CD4-positive, alpha-beta memory T cell (primary cell): ENCODE measurements at regions of chr4 and their contacts with region 1.

Region 1: DNA sequence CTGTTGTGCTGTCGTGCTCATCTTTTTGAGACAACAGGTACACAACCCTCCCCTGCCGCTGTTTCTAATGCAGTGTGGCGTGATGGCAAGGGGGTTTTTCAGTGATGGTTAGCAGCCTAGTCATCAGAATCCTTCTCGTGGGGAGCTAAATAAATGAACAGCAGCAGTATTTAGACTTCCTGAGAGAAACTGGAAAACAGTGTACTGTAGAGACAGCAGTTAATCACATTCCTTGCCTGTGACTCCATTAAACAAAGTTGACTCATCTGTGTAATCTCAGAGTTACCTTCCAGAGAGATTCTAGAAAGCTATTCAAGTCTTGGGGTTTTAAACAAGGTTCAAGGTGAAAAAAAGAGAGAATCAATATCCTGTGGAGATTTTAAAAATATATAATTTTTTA is 1753.2 kb upstream of the PCDH7 start:
- DNase-seq: no peak
- H3K4me3 ChIP-seq: no peak overlapping the region
- H3K4me3 Mint-ChIP-seq: no peak overlapping the region
- H3K27ac ChIP-seq: no peak overlapping the region
- H3K27ac Mint-ChIP-seq: no peak overlapping the region
- H3K4me1 ChIP-seq: no peaks in the 10 kb centered on the region
- H3K4me1 Mint-ChIP-seq: no peaks in the 10 kb centered on the region
- H3K27me3 ChIP-seq: no peaks in the 10 kb centered on the region
- H3K27me3 Mint-ChIP-seq: no peaks in the 10 kb centered on the region

Region 2: DNA sequence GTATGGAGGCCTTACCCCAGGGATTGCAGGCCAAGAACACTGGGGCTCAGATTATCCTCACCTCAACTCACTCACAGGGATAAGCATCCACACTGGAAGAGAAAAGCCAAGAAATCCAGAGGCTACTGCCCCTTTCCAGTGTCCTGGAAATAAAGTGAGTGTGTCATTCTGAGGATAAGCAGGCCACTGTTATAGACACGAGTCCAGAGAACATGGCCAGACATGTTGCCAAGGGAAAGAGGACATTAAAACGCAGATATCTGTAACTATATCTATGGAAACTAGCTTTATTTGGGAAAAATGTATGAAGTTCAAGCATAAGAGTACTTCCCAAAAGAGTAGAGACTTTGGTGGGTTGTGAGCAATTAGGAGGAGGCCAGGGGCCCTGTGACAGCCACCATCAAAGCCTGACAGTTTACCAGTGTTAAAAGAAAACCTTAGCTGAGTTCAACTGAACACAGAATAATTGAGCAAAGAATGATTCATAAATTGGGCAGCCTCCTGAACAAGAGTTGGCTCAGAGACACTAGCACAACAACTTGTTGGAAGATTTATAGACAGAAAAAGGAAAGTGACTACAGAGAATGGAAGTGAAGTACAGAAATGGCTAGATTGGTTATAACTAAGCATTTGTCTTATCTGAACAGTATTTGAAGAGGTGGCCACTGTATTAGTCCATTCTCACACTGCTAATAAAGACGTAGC is 884.1 kb before region 1 on chr4:
- CTCF ChIA-PET with region 1: no interaction called
- POLR2A ChIA-PET with region 1: no interaction called
- intact Hi-C with region 1: no loop called
- DNase-seq: no peak
- H3K4me3 ChIP-seq: no peak overlapping the region
- H3K4me3 Mint-ChIP-seq: no peak overlapping the region
- H3K27ac ChIP-seq: no peak overlapping the region
- H3K27ac Mint-ChIP-seq: no peak overlapping the region
- H3K4me1 ChIP-seq: no peaks in the 10 kb centered on the region
- H3K4me1 Mint-ChIP-seq: no peaks in the 10 kb centered on the region
- H3K27me3 ChIP-seq: no peaks in the 10 kb centered on the region
- H3K27me3 Mint-ChIP-seq: no peaks in the 10 kb centered on the region

Region 3: GRCh38 chr4:28918871-28919270 is 48.1 kb before region 1 on chr4:
- CTCF ChIA-PET with region 1: no interaction called
- POLR2A ChIA-PET with region 1: no interaction called
- intact Hi-C with region 1: loop called (anchors 5 kb)
- DNase-seq: no peak
- H3K4me3 ChIP-seq: no peak overlapping the region
- H3K4me3 Mint-ChIP-seq: no peak overlapping the region
- H3K27ac ChIP-seq: no peak overlapping the region
- H3K27ac Mint-ChIP-seq: no peak overlapping the region
- H3K4me1 ChIP-seq: no peaks in the 10 kb centered on the region
- H3K4me1 Mint-ChIP-seq: no peaks in the 10 kb centered on the region
- H3K27me3 ChIP-seq: no peaks in the 10 kb centered on the region
- H3K27me3 Mint-ChIP-seq: no peaks in the 10 kb centered on the region

Region 4: DNA sequence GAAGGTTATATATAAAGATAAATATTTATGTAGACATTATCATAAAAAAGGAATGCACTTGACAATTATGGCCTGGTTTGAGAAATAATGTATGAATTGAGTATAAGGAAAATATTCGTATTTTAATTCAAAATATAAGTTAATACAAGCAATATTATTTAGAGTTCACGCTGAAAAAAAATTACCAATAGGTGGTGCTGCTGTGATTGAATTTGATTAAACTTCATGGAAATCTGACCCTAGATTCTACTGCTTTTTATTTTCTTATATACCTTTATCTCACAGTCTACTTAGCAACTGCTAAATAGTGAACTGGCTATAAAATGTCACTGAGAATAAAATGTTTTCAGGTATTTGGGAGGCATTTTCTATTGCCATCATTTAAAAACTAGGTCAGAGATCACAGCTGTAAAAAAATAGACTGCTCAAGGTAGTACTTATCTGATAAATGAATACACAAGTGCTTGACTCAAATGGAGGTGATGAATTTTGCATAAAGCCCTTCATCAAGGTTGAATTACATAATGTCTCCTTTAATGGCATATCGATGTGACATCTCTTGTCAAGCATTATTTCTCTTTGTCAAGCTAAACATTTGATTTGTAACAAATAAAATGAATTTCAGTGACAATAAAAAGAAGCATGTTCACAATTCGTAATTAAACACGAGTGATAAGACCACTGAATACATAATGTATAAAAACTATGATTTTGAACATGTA is 114.4 kb after region 1 on chr4:
- CTCF ChIA-PET with region 1: no interaction called
- POLR2A ChIA-PET with region 1: no interaction called
- intact Hi-C with region 1: no loop called
- DNase-seq: no peak
- H3K4me3 ChIP-seq: no peak overlapping the region
- H3K4me3 Mint-ChIP-seq: no peak overlapping the region
- H3K27ac ChIP-seq: no peak overlapping the region
- H3K27ac Mint-ChIP-seq: no peak overlapping the region
- H3K4me1 ChIP-seq: no peaks in the 10 kb centered on the region
- H3K4me1 Mint-ChIP-seq: no peaks in the 10 kb centered on the region
- H3K27me3 ChIP-seq: no peaks in the 10 kb centered on the region
- H3K27me3 Mint-ChIP-seq: no peaks in the 10 kb centered on the region

Region 5: DNA sequence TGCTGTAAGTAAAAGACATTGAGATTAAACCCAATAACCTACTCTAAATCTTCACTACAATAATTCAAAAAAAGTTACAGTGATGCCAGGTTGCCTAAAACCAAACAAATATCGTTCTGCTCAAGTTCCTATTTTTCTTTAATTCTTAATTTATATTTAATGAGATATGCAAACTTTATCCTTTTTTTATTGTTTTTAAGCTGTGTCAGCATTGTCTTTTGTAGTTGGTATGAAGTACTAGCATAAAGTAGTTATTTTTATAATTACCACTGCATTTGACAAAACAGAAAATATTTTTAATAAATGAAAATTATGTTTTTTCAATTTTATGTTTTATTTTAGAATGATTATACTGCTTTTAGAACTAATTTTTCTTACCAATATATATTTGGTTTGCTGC is 322.1 kb after region 1 on chr4:
- CTCF ChIA-PET with region 1: no interaction called
- POLR2A ChIA-PET with region 1: no interaction called
- intact Hi-C with region 1: no loop called
- DNase-seq: no peak
- H3K4me3 ChIP-seq: no peak overlapping the region
- H3K4me3 Mint-ChIP-seq: no peak overlapping the region
- H3K27ac ChIP-seq: no peak overlapping the region
- H3K27ac Mint-ChIP-seq: no peak overlapping the region
- H3K4me1 ChIP-seq: no peaks in the 10 kb centered on the region
- H3K4me1 Mint-ChIP-seq: no peaks in the 10 kb centered on the region
- H3K27me3 ChIP-seq: no peaks in the 10 kb centered on the region
- H3K27me3 Mint-ChIP-seq: no peaks in the 10 kb centered on the region